ENCODE measurements at regions of chr12 and their contacts with region 1.

Region 1: DNA sequence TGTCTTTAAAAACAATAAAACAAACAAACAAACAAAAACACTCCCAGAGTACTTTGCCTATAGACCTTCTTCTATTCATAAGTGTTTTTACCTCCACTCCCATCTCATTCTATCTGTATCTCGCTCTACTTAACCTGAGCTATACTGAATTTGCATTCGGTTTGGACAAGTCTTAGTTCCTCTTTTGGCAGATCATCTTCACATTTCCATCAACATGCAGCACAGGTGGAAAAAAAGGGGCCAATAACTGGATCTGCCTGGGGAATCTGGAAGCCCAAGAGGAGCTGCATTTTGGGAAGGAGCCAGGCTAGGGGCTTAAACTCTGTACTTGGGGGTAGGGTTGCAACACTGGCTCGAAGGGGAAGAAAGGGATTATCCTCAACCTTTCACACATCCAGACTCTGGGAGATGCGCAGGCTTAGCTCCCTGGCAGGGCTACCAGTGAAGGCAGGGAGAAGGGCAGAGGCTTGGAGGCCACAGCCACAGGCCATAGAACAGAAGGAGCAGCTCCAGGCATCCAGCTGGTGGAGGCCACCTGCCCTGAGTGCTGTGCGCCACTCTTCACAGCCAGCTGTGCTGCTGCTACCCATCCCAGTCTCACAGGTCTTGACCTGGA is 4.0 kb downstream of the NINJ2 start:
- DNase-seq: no peak
- ATAC-seq: no peak
- H3K4me3 ChIP-seq: no peak overlapping the region
- H3K27ac ChIP-seq: no peak overlapping the region
- H3K4me1 ChIP-seq: peaks cover 9% of the 10 kb centered on the region
- H3K27me3 ChIP-seq: no peaks in the 10 kb centered on the region
- CTCF ChIP-seq: no peak

Region 2: DNA sequence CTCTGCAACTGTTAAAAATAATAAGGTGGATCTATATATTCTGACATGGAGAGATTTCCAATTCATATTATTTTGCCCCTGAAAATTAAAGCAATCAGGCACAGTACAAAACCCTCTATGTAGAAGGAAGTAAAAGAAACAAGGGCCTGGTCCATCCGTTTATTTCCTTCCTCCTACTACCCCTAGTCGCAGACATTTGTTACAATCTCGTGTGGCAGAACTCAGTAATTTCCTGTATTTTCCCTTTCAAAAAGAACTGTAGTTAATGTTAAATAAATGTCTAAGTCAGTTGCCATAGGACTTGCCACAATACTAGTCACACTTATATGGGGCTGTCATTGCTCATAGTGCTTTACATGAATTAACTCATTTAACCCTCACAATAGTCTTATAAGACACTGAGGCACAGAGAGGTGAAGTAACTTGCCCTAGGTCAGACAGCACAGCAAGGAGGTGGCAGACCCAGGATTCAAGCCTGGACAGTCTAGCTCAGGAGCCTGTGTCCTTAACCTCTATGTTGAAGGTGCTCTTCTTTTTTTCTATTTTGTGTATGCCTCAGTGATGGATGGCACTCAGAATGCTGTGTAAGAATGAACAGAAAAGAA is 20.1 kb before region 1 on chr12:
- CTCF ChIA-PET with region 1: no interaction called
- POLR2A ChIA-PET with region 1: no interaction called
- in situ Hi-C with region 1: no loop called
- intact Hi-C with region 1: no loop called
- DNase-seq: no peak
- ATAC-seq: no peak
- H3K4me3 ChIP-seq: no peak overlapping the region
- H3K27ac ChIP-seq: peak overlapping the region; percentile 72
- H3K4me1 ChIP-seq: peaks cover 20% of the 10 kb centered on the region
- H3K27me3 ChIP-seq: no peaks in the 10 kb centered on the region
- CTCF ChIP-seq: no peak

Region 3: DNA sequence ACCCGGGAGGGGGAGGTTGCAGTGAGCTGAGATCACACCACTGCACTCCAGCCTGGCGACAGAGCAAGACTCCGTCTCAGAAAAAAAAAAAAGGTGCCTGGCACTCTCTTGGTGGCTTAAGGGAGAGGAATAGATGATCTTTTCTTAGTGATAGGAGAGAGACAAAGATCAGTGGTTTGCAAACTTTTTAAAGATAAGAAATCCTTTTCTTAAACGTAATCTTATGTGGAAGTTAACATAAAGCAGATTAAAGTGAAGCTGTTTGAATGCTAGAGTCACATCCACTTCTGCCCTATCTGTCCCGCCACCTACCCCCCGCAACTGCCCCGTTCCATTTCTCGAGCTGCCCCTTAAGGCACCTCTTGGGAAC is 10.4 kb after region 1 on chr12:
- CTCF ChIA-PET with region 1: no interaction called
- POLR2A ChIA-PET with region 1: interaction called, 18 read pairs
- in situ Hi-C with region 1: no loop called
- intact Hi-C with region 1: no loop called
- DNase-seq: no peak
- ATAC-seq: no peak
- H3K4me3 ChIP-seq: no peak overlapping the region
- H3K27ac ChIP-seq: no peak overlapping the region
- H3K4me1 ChIP-seq: no peaks in the 10 kb centered on the region
- H3K27me3 ChIP-seq: no peaks in the 10 kb centered on the region
- CTCF ChIP-seq: no peak